Panc1 (cell line): ENCODE measurements at regions of chr12 and their contacts with region 1.

Region 1: DNA sequence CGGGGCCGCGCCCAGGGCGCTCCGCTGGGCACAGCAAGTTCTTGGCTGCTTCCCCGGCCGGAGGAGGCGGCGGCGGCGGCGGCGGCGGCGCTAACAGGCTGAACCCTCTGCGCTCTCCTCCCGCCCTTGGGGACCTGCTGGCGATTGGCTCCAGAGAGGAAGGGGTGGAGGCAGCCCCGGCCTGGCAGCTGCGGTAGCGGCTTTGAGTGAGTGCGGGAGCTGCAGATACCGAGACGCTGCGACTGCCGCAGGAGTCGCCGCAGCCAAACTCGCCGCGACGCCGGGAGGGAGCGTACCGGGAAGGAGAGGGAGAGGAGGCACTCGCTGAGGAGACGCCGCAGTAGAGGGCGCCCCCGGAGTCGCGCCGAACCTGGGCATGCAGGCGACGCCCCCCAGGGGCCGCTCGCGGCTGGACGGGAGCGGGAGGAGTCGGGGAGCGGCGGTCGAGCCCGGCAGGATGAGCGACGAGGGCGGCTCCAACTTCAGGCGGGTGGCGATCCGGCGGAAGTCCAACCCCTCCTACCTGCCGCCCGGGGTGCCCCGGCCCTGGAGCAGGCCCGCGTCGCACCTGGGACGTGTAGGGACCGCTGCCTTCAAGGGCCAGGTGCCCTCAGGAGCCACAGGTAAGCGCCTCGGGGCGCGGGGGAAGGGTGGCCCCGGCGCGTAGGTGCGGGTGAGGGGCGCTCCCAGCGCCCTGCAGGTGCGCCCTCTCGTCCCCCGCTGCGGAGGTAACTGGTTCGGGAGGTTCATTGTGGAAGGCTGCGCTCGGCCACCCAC is at the start of gene FGD4:
- DNase-seq: no peak
- ATAC-seq: peak; percentile 98
- H3K4me3 ChIP-seq: peak within 1 kb of the TSS; percentile 69 to 80
- H3K27ac ChIP-seq: peak within 1 kb of the TSS; percentile 72
- H3K4me1 ChIP-seq: peaks cover 7% of the 10 kb centered on the region
- H3K27me3 ChIP-seq: 0 out of 2 replicates have a peak, but pooled peaks cover 4% of the 10 kb centered on the region
- CTCF ChIP-seq: peak; percentile 84
- total RNA-seq, gene FGD4: 5.0 TPM

Region 2: GRCh38 chr12:31783996-31784645 is 615.4 kb before region 1 on chr12:
- CTCF ChIA-PET with region 1: no interaction called
- POLR2A ChIA-PET with region 1: no interaction called
- in situ Hi-C with region 1: no loop called
- intact Hi-C with region 1: no loop called
- DNase-seq: no peak
- ATAC-seq: no peak
- H3K4me3 ChIP-seq: no peak overlapping the region
- H3K27ac ChIP-seq: no peak overlapping the region
- H3K4me1 ChIP-seq: no peaks in the 10 kb centered on the region
- H3K27me3 ChIP-seq: no peaks in the 10 kb centered on the region
- CTCF ChIP-seq: no peak

Region 3: DNA sequence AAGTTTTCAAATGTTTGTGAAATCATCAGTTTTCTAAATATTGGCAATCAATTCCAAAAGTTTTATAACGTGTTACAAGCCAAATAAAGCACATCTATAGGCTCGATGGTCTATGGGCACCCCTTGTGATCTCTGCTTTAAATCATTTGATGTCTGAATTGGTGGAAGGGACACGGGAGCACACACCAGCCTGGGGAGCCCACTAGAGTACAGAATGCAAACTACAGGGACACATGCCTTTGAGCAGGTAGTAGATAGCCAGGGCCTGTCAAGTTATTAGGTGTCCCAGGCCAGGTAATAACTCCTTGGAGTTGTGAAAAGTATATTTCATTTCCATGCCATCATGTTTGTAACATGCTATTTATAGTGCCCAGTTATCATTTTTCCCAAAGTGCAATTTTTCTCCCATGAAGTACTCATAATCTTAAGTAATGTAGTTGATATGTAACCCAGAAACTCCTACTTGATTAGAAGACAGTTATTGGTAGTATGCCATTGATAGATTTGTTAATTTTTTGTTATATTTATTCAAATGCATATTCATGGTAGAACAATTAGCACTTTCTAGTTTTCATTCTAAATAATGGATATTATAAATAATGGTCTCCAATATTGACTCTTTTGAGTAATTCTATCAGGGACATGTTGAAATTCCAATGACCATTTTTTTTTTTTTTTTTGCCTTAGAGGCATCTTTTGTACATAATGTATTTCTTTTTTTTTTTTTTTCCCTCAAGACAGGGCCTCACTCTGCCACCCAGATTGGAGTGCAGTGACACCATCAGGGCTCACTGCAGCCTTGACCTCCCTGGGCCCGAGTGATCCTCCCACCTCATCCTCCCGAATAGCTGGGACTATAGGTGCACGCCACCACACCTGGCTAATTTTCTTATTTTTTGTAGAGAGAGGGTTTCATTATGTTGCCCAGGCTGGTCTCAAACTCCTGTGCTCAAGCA is 97.0 kb before region 1 on chr12:
- CTCF ChIA-PET with region 1: no interaction called
- POLR2A ChIA-PET with region 1: no interaction called
- in situ Hi-C with region 1: no loop called
- intact Hi-C with region 1: no loop called
- DNase-seq: peak; percentile 45
- ATAC-seq: peak; percentile 85
- H3K4me3 ChIP-seq: no peak overlapping the region
- H3K27ac ChIP-seq: no peak overlapping the region
- H3K4me1 ChIP-seq: peaks cover 3% of the 10 kb centered on the region; the same call in 1 of the 2 replicates
- H3K27me3 ChIP-seq: no peaks in the 10 kb centered on the region
- CTCF ChIP-seq: peak; percentile 80

Region 4: GRCh38 chr12:32365473-32366064 is 34.0 kb before region 1 on chr12:
- CTCF ChIA-PET with region 1: no interaction called
- POLR2A ChIA-PET with region 1: interaction called, 11 read pairs
- in situ Hi-C with region 1: no loop called
- intact Hi-C with region 1: no loop called
- DNase-seq: peak; percentile 77
- ATAC-seq: peak; percentile 84
- H3K4me3 ChIP-seq: no peak overlapping the region
- H3K27ac ChIP-seq: no peak overlapping the region
- H3K4me1 ChIP-seq: no peaks in the 10 kb centered on the region
- H3K27me3 ChIP-seq: no peaks in the 10 kb centered on the region
- CTCF ChIP-seq: peak; percentile 86; the same call in 1 of the 2 replicates

Region 5: DNA sequence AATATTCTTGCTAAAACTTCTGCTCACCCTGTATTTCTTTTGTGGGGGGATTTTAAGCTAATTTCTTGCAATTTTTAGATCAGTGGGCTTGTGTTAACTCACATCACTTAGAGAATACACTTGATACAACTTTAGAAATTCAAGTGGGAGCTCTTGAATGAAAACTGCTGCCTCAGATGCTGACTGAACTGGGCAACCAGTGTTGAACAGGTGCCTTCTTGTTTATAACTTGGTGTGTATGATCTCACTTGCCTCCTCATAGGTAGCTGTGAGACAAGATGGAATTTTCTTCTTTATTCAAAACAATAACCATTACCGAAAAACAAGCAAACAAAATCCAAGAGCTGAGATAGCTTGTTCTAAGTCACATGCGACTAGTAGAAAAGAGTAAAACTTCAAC is 63.4 kb after region 1 on chr12:
- CTCF ChIA-PET with region 1: no interaction called
- POLR2A ChIA-PET with region 1: no interaction called
- in situ Hi-C with region 1: no loop called
- intact Hi-C with region 1: no loop called
- DNase-seq: no peak
- ATAC-seq: no peak
- H3K4me3 ChIP-seq: no peak overlapping the region
- H3K27ac ChIP-seq: no peak overlapping the region
- H3K4me1 ChIP-seq: 0 out of 2 replicates have a peak, but pooled peaks cover 3% of the 10 kb centered on the region
- H3K27me3 ChIP-seq: no peaks in the 10 kb centered on the region
- CTCF ChIP-seq: no peak

Region 6: GRCh38 chr12:32533971-32534590 is 134.6 kb after region 1 on chr12:
- CTCF ChIA-PET with region 1: no interaction called
- POLR2A ChIA-PET with region 1: no interaction called
- in situ Hi-C with region 1: no loop called
- intact Hi-C with region 1: no loop called
- DNase-seq: peak; percentile 5
- ATAC-seq: peak; percentile 91
- H3K4me3 ChIP-seq: peak overlapping the region; percentile 4 to 15; a peak in 3 of 4 replicates
- H3K27ac ChIP-seq: 0 out of 2 replicates have a peak overlapping the region, but pooled peaks have one; percentile 8
- H3K4me1 ChIP-seq: peaks cover 15% of the 10 kb centered on the region
- H3K27me3 ChIP-seq: no peaks in the 10 kb centered on the region; the same call in 1 of the 2 replicates
- CTCF ChIP-seq: no peak

Region 7: GRCh38 chr12:32650508-32650907 is 251.0 kb after region 1 on chr12:
- CTCF ChIA-PET with region 1: interaction called, 20 read pairs
- POLR2A ChIA-PET with region 1: no interaction called
- in situ Hi-C with region 1: no loop called
- intact Hi-C with region 1: no loop called
- DNase-seq: no peak
- ATAC-seq: no peak
- H3K4me3 ChIP-seq: no peak overlapping the region
- H3K27ac ChIP-seq: no peak overlapping the region
- H3K4me1 ChIP-seq: no peaks in the 10 kb centered on the region
- H3K27me3 ChIP-seq: no peaks in the 10 kb centered on the region
- CTCF ChIP-seq: no peak